H1 (cell line): ENCODE measurements at regions of chr5 and their contacts with region 1.

Region 1: GRCh38 chr5:71697967-71698366 is 21.1 kb upstream of the CARTPT start:
- DNase-seq: peak; percentile 71 to 89
- H3K4me3 ChIP-seq: no peak overlapping the region
- H3K27ac ChIP-seq: no peak overlapping the region
- H3K4me1 ChIP-seq: peaks cover 0 to 4% (median 0%) of the 10 kb centered on the region in 4 experiments; a peak in 3 of 7 replicates
- H3K27me3 ChIP-seq: no peaks in the 10 kb centered on the region
- CTCF ChIP-seq: peak; percentile 81 to 95 (median 90)
- EP300 ChIP-seq: no peak
- POLR2A ChIP-seq: no peak
- RAD21 ChIP-seq: peak; percentile 51 to 62

Region 2: DNA sequence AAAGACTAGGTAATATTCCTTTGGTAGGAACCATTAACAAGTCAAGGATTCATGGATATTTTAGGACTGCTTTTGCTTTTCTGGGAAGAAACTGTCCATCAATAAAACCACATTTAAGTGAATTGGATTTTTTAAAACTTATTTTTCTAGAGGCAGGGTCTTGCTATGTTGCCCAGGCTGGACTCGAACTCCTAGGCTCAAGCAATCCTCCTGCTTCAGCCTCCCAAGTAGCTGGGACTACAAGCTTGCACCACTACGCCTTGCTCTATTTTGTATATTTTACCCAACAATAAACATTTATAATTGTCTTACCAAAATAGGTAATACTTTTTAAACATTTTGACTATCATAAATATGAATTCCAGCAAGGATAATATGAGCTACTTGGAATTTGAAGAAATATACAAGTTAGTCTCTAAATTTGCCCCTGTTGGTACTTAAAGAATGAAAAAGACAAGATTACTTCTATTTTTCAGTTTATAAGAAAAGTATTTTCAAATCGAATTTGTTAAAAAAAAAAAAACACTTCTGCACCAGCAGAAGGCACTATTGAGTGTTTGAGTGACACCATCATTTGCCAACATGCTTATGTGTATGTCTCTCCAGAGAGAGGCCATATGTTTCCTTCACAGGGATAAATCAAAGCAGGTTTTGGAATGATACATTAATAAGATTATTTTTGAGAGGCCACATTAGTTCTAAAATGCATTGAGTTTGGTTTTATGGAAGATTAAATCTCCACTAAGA is 38.9 kb before region 1 on chr5:
- CTCF ChIA-PET with region 1: interaction called, 11 read pairs
- POLR2A ChIA-PET with region 1: no interaction called
- DNase-seq: no peak
- H3K4me3 ChIP-seq: no peak overlapping the region
- H3K27ac ChIP-seq: no peak overlapping the region
- H3K4me1 ChIP-seq: no peaks in the 10 kb centered on the region
- H3K27me3 ChIP-seq: no peaks in the 10 kb centered on the region
- CTCF ChIP-seq: peak in 1 of 3 experiments; percentile 3; a peak in 2 of 4 replicates
- EP300 ChIP-seq: no peak
- POLR2A ChIP-seq: no peak
- RAD21 ChIP-seq: peak; percentile 30 to 40; a peak in 2 of 4 replicates

Region 3: DNA sequence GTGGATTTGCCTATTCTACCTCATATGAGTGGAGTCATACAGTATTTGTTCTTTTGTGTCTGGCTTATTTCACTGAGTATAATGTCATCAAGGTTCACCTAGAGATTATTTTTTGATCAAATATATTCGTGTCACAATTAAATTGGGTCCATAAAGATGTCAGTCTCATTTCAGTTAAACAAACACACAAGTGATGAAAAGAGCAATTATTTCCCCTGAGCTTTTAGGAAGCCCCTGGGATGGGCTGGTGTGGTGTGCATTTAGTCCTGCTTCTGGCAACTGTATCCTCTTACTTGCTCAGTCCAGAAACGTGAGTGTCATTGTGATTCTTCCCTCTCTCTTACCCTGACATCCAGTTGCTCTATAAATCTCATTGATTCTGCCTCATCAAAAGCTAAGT is 31.6 kb before region 1 on chr5:
- CTCF ChIA-PET with region 1: interaction called, 13 read pairs
- POLR2A ChIA-PET with region 1: no interaction called
- DNase-seq: no peak
- H3K4me3 ChIP-seq: no peak overlapping the region
- H3K27ac ChIP-seq: no peak overlapping the region
- H3K4me1 ChIP-seq: no peaks in the 10 kb centered on the region
- H3K27me3 ChIP-seq: no peaks in the 10 kb centered on the region
- CTCF ChIP-seq: no peak
- EP300 ChIP-seq: no peak
- POLR2A ChIP-seq: no peak
- RAD21 ChIP-seq: no peak

Region 4: GRCh38 chr5:71719063-71719964 is 21.3 kb after region 1 on chr5 and contains the start of gene CARTPT:
- CTCF ChIA-PET with region 1: interaction called, 19 read pairs
- POLR2A ChIA-PET with region 1: interaction called, 3 read pairs
- DNase-seq: peak in 1 of 2 experiments; percentile 82
- H3K4me3 ChIP-seq: peak within 1 kb of the TSS in 3 of 4 experiments; percentile 32 to 51 (median 45); a peak in 5 of 8 replicates
- H3K27ac ChIP-seq: no peak within 1 kb of the TSS
- H3K4me1 ChIP-seq: peaks cover 2 to 8% (median 6%) of the 10 kb centered on the region in 4 experiments; a peak in 5 of 7 replicates
- H3K27me3 ChIP-seq: peaks cover 9 to 30% (median 28%) of the 10 kb centered on the region in 4 experiments
- CTCF ChIP-seq: peak in 2 of 3 experiments; percentile 0 to 1; a peak in 1 of 4 replicates
- EP300 ChIP-seq: no peak
- POLR2A ChIP-seq: no peak
- RAD21 ChIP-seq: peak in 1 of 2 experiments; percentile 23; a peak in 1 of 4 replicates
- total RNA-seq, gene CARTPT: not detected in 2 replicates

Region 5: DNA sequence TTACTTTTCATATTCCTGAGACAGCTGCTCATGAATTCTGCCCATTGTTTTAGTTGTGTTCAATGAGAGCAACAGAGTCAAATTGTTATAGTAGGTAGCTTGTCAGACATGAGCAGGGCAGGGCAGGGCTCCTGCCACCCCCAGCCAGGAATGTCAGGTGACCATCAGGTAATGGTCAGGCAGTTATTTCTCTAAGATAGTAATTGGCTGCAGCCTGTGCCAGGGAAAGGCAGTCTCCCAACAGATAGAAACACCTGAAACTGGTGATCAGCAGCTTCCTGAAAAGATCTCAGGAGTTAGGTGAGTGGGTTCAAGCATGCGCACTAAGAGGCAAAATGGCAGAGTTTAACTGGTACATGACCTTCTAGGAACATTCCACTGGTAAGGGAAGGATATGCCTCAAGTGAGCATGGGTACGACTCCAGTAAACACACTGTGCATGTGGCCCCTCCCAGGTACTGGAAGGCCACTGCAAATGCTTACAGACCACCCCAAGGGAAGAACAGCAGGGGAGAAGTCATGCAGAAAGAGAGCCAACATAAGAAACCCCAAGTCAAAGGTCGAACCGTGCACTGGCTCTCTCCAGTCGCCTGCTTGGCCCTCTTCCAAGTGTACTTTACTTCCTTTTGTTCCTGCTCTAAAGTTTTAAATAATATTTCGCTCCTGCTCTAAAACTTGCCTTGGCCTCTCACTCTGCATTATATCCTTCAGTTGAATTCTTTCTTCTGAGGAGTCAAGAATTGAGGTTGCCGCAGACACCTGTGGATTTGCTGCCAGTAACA is 46.2 kb after region 1 on chr5:
- CTCF ChIA-PET with region 1: no interaction called
- POLR2A ChIA-PET with region 1: no interaction called
- DNase-seq: no peak
- H3K4me3 ChIP-seq: no peak overlapping the region
- H3K27ac ChIP-seq: no peak overlapping the region
- H3K4me1 ChIP-seq: no peaks in the 10 kb centered on the region
- H3K27me3 ChIP-seq: no peaks in the 10 kb centered on the region
- CTCF ChIP-seq: no peak
- EP300 ChIP-seq: no peak
- POLR2A ChIP-seq: no peak
- RAD21 ChIP-seq: no peak

Region 6: GRCh38 chr5:71757590-71758543 is 59.9 kb after region 1 on chr5:
- CTCF ChIA-PET with region 1: interaction called, 11 read pairs
- POLR2A ChIA-PET with region 1: no interaction called
- DNase-seq: peak; percentile 31 to 63
- H3K4me3 ChIP-seq: no peak overlapping the region
- H3K27ac ChIP-seq: no peak overlapping the region
- H3K4me1 ChIP-seq: no peaks in the 10 kb centered on the region; a peak in 1 of 7 replicates
- H3K27me3 ChIP-seq: no peaks in the 10 kb centered on the region
- CTCF ChIP-seq: peak; percentile 78 to 89 (median 80)
- EP300 ChIP-seq: no peak
- POLR2A ChIP-seq: no peak
- RAD21 ChIP-seq: peak; percentile 97 to 98

Region 7: GRCh38 chr5:71794061-71794695 is 96.2 kb after region 1 on chr5:
- CTCF ChIA-PET with region 1: no interaction called
- POLR2A ChIA-PET with region 1: no interaction called
- DNase-seq: no peak
- H3K4me3 ChIP-seq: no peak overlapping the region
- H3K27ac ChIP-seq: no peak overlapping the region
- H3K4me1 ChIP-seq: no peaks in the 10 kb centered on the region; a peak in 2 of 7 replicates
- H3K27me3 ChIP-seq: no peaks in the 10 kb centered on the region
- CTCF ChIP-seq: no peak
- EP300 ChIP-seq: no peak
- POLR2A ChIP-seq: no peak
- RAD21 ChIP-seq: no peak

Region 8: DNA sequence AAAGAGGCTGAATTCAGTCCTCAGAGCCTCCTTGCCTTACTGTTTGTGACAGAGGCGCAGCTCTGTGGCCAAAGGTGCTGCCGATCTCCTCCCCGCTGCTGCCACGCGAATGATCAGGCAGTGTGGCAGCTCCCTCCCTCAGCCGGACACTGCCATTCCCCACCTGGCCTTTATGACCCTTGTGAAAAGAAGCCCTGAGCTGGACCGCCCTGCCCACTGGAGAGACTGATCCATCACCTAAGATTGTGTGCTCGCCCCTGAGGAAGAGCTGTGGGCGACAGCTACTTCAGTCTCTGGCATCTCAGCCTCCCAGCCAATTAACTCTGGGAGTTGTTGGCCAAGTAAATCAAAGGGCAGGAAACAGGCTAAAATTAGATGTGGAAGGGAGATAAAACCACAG is 112.1 kb after region 1 on chr5:
- CTCF ChIA-PET with region 1: no interaction called
- POLR2A ChIA-PET with region 1: no interaction called
- DNase-seq: no peak
- H3K4me3 ChIP-seq: no peak overlapping the region
- H3K27ac ChIP-seq: no peak overlapping the region
- H3K4me1 ChIP-seq: peaks cover 0 to 15% (median 9%) of the 10 kb centered on the region in 4 experiments; a peak in 5 of 7 replicates
- H3K27me3 ChIP-seq: no peaks in the 10 kb centered on the region
- CTCF ChIP-seq: no peak
- EP300 ChIP-seq: no peak
- POLR2A ChIP-seq: no peak
- RAD21 ChIP-seq: no peak